Naive thymus-derived CD4-positive, alpha-beta T cell (primary cell): ENCODE measurements at regions of chr7 and their contacts with region 1.

Region 1: GRCh38 chr7:140653319-140654108 is 12.9 kb upstream of the DENND2A start:
- DNase-seq: peak in 5 of 9 donors; percentile 23 to 55 (median 41)
- ATAC-seq: peak; percentile 55
- H3K4me3 ChIP-seq: no peak overlapping the region
- H3K4me3 Mint-ChIP-seq: peak overlapping the region in 4 of 10 donors; percentile 21 to 42 (median 34)
- H3K27ac ChIP-seq: no peak overlapping the region
- H3K27ac Mint-ChIP-seq: peak overlapping the region in 2 of 9 donors; percentile 16 to 63
- H3K4me1 ChIP-seq: peaks cover 0 to 9% of the 10 kb centered on the region in 2 donors
- H3K4me1 Mint-ChIP-seq: peaks cover 6 to 26% (median 21%) of the 10 kb centered on the region in 7 donors
- H3K27me3 ChIP-seq: no peaks in the 10 kb centered on the region
- H3K27me3 Mint-ChIP-seq: peaks cover 5 to 40% (median 14%) of the 10 kb centered on the region in 5 donors

Region 2: DNA sequence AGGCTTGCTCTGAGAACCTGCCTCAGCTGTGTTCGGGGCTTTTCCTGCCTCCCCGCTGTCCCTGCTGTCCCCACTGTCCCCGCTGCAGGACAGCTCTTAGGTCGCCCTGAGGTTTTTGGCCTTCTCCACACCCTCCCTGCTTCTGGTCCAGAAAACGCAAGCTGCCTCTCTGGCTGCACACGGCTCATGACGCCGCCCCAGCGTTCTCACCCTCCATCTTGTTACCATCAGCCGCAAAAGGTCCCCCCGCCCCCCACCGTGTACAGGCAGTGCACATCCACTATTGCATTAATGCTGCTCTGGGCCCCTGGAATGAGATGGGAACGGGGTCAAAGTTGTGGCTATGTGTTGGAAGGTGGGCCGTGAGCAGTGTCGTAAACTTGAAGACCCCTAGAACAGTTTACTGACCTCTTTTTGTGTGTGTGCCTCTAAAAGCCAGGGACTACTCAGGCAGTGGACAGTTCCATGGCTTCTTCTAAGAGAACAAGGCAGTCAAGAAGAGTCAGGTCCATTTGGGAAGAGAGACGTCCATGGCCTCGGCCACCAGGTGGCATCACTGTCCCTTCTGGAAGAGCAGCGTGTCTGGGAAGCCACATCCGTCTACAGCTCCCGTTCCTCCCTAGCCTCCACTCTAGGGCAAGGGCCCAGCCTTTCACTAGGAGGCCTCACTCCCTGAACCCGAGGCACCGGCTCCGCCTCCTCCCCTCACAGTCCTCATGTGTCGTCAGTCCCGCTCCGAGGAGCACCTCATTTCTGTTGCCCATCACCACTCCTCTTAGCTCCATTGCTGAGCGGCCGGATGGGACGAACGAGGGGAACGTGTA is 135.8 kb before region 1 on chr7:
- CTCF ChIA-PET with region 1: interaction called, 3 read pairs
- POLR2A ChIA-PET with region 1: no interaction called
- intact Hi-C with region 1: loop called in 1 of 2 experiments (anchors 1 kb)
- DNase-seq: peak; percentile 36 to 69 (median 45)
- ATAC-seq: peak; percentile 74
- H3K4me3 ChIP-seq: no peak overlapping the region
- H3K4me3 Mint-ChIP-seq: peak overlapping the region in 4 of 10 donors; percentile 23 to 65 (median 41)
- H3K27ac ChIP-seq: no peak overlapping the region
- H3K27ac Mint-ChIP-seq: peak overlapping the region in 1 of 9 donors; percentile 65
- H3K4me1 ChIP-seq: no peaks in the 10 kb centered on the region
- H3K4me1 Mint-ChIP-seq: peaks cover 0 to 7% (median 3%) of the 10 kb centered on the region in 7 donors
- H3K27me3 ChIP-seq: peaks cover 0 to 2% of the 10 kb centered on the region in 2 donors
- H3K27me3 Mint-ChIP-seq: peaks cover 0 to 11% (median 6%) of the 10 kb centered on the region in 5 donors

Region 3: GRCh38 chr7:140607441-140607989 is 46.0 kb before region 1 on chr7:
- CTCF ChIA-PET with region 1: no interaction called
- POLR2A ChIA-PET with region 1: no interaction called
- intact Hi-C with region 1: no loop called
- DNase-seq: no peak
- ATAC-seq: no peak
- H3K4me3 ChIP-seq: no peak overlapping the region
- H3K4me3 Mint-ChIP-seq: no peak overlapping the region
- H3K27ac ChIP-seq: no peak overlapping the region
- H3K27ac Mint-ChIP-seq: no peak overlapping the region
- H3K4me1 ChIP-seq: no peaks in the 10 kb centered on the region
- H3K4me1 Mint-ChIP-seq: no peaks in the 10 kb centered on the region
- H3K27me3 ChIP-seq: no peaks in the 10 kb centered on the region
- H3K27me3 Mint-ChIP-seq: peaks cover 0 to 5% (median 0%) of the 10 kb centered on the region in 5 donors